ENCODE measurements at regions of chr7 and their contacts with region 1.

Region 1: GRCh38 chr7:107563775-107564552 is at the starts of genes COG5 and DUS4L:
- DNase-seq: peak; percentile 92
- ATAC-seq: peak; percentile 93
- H3K4me3 ChIP-seq: peak within 1 kb of the TSS; percentile 86 to 98 (median 93)
- H3K4me3 Mint-ChIP-seq: peak within 1 kb of the TSS; percentile 88
- H3K27ac ChIP-seq: peak within 1 kb of the TSS; percentile 88 to 94
- H3K27ac Mint-ChIP-seq: peak within 1 kb of the TSS; percentile 94
- H3K4me1 ChIP-seq: peaks cover 18 to 23% of the 10 kb centered on the region in 2 donors
- H3K4me1 Mint-ChIP-seq: peaks cover 50% of the 10 kb centered on the region
- H3K27me3 ChIP-seq: no peaks in the 10 kb centered on the region
- H3K27me3 Mint-ChIP-seq: no peaks in the 10 kb centered on the region
- CTCF ChIP-seq: no peak
- total RNA-seq, gene COG5: 73.0 and 74.8 TPM in 2 replicates
- total RNA-seq, gene DUS4L: 17.6 and 18.7 TPM in 2 replicates

Region 2: GRCh38 chr7:107579885-107580715 is 16.1 kb after region 1 on chr7 and contains the start of gene BCAP29:
- CTCF ChIA-PET with region 1: interaction called, 3 read pairs
- POLR2A ChIA-PET with region 1: interaction called, 7 read pairs
- intact Hi-C with region 1: loop called (anchors 1 kb)
- DNase-seq: peak; percentile 87
- ATAC-seq: peak; percentile 98
- H3K4me3 ChIP-seq: peak within 1 kb of the TSS; percentile 75 to 93 (median 85)
- H3K4me3 Mint-ChIP-seq: peak within 1 kb of the TSS; percentile 85
- H3K27ac ChIP-seq: peak within 1 kb of the TSS; percentile 66 to 80
- H3K27ac Mint-ChIP-seq: peak within 1 kb of the TSS; percentile 79
- H3K4me1 ChIP-seq: peaks cover 4 to 7% of the 10 kb centered on the region in 2 donors
- H3K4me1 Mint-ChIP-seq: peaks cover 23% of the 10 kb centered on the region
- H3K27me3 ChIP-seq: no peaks in the 10 kb centered on the region
- H3K27me3 Mint-ChIP-seq: no peaks in the 10 kb centered on the region
- CTCF ChIP-seq: no peak
- total RNA-seq, gene BCAP29: 27.3 and 31.8 TPM in 2 replicates